MCF 10A (cell line): ENCODE measurements at regions of chr1 and their contacts with region 1.

Region 1: GRCh38 chr1:47997289-47998200 is at the start of gene TRABD2B:
- DNase-seq: peak; percentile 74
- H3K4me3 Mint-ChIP-seq: peak within 1 kb of the TSS; percentile 78
- H3K27ac Mint-ChIP-seq: peak within 1 kb of the TSS; percentile 76
- H3K4me1 Mint-ChIP-seq: peaks cover 33% of the 10 kb centered on the region
- H3K27me3 Mint-ChIP-seq: no peaks in the 10 kb centered on the region
- CTCF ChIP-seq: peak; percentile 85
- total RNA-seq, gene TRABD2B: 0.96 and 2.6 TPM in 2 replicates

Region 2: GRCh38 chr1:46940307-46940706 is 1057.2 kb before region 1 on chr1:
- CTCF ChIA-PET with region 1: no interaction called
- POLR2A ChIA-PET with region 1: no interaction called
- intact Hi-C with region 1: no loop called
- DNase-seq: no peak
- H3K4me3 Mint-ChIP-seq: no peak overlapping the region
- H3K27ac Mint-ChIP-seq: no peak overlapping the region
- H3K4me1 Mint-ChIP-seq: peaks cover 9% of the 10 kb centered on the region
- H3K27me3 Mint-ChIP-seq: peaks cover 11% of the 10 kb centered on the region
- CTCF ChIP-seq: no peak

Region 3: GRCh38 chr1:47738560-47739182 is 258.9 kb before region 1 on chr1:
- CTCF ChIA-PET with region 1: interaction called, 13 read pairs
- POLR2A ChIA-PET with region 1: interaction called, 3 read pairs
- intact Hi-C with region 1: loop called (anchors 2 kb)
- DNase-seq: peak; percentile 73
- H3K4me3 Mint-ChIP-seq: no peak overlapping the region
- H3K27ac Mint-ChIP-seq: no peak overlapping the region
- H3K4me1 Mint-ChIP-seq: no peaks in the 10 kb centered on the region
- H3K27me3 Mint-ChIP-seq: peaks cover 25% of the 10 kb centered on the region
- CTCF ChIP-seq: peak; percentile 77

Region 4: DNA sequence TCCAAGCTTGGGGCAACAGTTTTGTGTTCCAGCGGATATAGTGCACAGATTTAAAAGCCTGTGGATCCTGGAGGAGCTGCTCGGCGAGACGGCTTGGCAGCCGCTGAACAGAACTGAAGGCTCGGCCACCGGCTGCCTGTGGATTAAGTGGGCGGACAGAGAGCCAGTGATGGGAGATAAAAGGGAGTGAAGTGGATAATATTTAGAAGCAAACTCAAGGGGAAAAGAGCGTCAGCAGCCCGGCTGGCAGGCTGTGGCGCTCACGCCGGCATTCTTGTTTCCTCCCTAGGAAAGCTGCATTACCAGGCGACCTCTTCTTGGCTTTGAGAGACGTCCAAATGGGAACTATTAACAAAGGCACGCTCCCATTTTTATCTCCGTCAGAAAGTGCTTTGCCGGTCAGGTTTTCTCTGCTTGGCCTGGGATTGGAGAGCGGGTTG is 10.8 kb before region 1 on chr1:
- CTCF ChIA-PET with region 1: interaction called, 19 read pairs
- POLR2A ChIA-PET with region 1: no interaction called
- intact Hi-C with region 1: no loop called
- DNase-seq: no peak
- H3K4me3 Mint-ChIP-seq: no peak overlapping the region
- H3K27ac Mint-ChIP-seq: no peak overlapping the region
- H3K4me1 Mint-ChIP-seq: peaks cover 6% of the 10 kb centered on the region
- H3K27me3 Mint-ChIP-seq: no peaks in the 10 kb centered on the region
- CTCF ChIP-seq: no peak

Region 5: DNA sequence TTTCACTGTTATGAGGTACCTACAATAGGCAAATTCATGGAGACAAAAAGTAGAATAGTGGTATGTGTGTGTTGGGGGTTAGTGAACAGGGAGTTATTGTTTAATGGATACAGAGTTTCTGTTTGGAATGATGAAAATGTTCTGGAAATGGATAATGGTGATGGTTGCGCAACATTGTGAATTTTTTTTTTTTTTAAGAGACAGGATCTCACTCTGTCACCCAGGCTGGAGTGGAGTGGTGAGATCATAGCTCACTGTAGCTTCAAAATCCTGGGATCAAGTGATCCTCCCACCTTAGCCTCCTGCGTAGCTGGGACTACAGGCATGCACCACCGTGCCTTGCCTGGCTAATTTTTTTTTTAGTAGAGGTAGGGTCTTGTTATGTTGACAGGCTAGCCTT is 34.1 kb after region 1 on chr1:
- CTCF ChIA-PET with region 1: interaction called, 19 read pairs
- POLR2A ChIA-PET with region 1: no interaction called
- intact Hi-C with region 1: no loop called
- DNase-seq: peak; percentile 23
- H3K4me3 Mint-ChIP-seq: no peak overlapping the region
- H3K27ac Mint-ChIP-seq: no peak overlapping the region
- H3K4me1 Mint-ChIP-seq: peaks cover 21% of the 10 kb centered on the region
- H3K27me3 Mint-ChIP-seq: no peaks in the 10 kb centered on the region
- CTCF ChIP-seq: no peak

Region 6: DNA sequence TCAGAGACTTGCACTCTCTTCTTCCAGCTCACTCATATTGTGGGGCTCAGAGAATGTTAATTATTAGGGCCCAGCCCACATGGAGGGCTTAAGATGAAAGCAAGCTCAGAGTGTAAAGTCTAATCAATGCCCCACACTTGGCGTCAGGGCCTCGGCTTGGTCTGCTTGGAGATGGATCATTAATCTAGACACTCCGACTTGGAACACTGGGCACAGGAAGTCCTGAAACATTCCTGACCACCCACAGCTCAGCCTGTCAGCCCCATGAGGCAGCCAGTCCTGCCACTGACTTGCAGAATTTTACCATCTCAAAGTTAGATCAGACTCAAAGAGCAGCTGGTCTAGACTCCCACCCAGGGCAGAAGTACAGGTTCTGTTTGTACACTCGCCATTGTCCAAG is 69.4 kb after region 1 on chr1:
- CTCF ChIA-PET with region 1: interaction called, 141 read pairs
- POLR2A ChIA-PET with region 1: interaction called, 5 read pairs
- intact Hi-C with region 1: no loop called
- DNase-seq: no peak
- H3K4me3 Mint-ChIP-seq: no peak overlapping the region
- H3K27ac Mint-ChIP-seq: no peak overlapping the region
- H3K4me1 Mint-ChIP-seq: peaks cover 26% of the 10 kb centered on the region
- H3K27me3 Mint-ChIP-seq: no peaks in the 10 kb centered on the region
- CTCF ChIP-seq: no peak

Region 7: GRCh38 chr1:48236716-48237470 is 239.3 kb after region 1 on chr1:
- CTCF ChIA-PET with region 1: interaction called, 5 read pairs
- POLR2A ChIA-PET with region 1: no interaction called
- intact Hi-C with region 1: loop called (anchors 5 kb)
- DNase-seq: peak; percentile 43
- H3K4me3 Mint-ChIP-seq: no peak overlapping the region
- H3K27ac Mint-ChIP-seq: no peak overlapping the region
- H3K4me1 Mint-ChIP-seq: no peaks in the 10 kb centered on the region
- H3K27me3 Mint-ChIP-seq: no peaks in the 10 kb centered on the region
- CTCF ChIP-seq: peak; percentile 74

Region 8: DNA sequence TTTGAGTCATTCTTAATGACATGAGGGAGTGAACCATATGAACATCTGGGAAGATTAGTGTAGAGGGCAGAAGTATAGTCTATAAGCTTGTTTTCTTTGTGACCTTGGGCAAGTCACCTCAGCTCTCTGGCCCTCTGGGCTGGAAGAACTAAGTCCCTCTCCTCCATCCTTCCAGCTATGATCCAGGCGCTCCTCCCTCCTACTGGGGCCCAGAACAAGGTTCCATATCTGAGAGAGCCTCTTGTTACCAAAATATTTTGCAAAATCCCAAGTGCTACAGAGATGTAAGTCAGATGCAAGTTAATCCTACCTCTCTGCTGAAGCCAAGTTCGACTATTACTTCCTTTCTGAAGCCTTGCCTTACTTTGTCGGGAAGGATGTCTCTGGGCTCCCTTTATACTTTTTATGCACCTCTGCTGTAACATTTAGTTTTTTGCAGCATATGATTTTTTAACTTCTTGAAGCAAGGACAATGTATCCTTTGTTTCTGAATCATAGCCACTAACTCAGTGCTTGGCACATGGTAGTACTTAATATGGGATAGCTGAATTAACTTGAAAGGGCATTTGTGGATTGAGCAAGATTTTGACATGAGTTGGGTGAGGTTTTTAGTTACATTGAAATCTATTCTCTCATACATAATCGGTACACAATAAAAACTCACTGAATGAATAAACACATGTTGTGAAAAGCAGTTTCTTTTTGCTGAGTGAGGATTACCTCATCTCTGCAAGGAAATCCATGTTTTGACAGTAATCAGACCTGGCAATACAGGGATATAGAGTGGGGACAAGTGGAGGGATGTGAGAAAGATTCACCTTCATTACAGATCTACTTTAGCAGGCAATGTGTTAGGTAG is 833.8 kb after region 1 on chr1:
- CTCF ChIA-PET with region 1: no interaction called
- POLR2A ChIA-PET with region 1: no interaction called
- intact Hi-C with region 1: no loop called
- DNase-seq: peak; percentile 26
- H3K4me3 Mint-ChIP-seq: no peak overlapping the region
- H3K27ac Mint-ChIP-seq: peak overlapping the region; percentile 7
- H3K4me1 Mint-ChIP-seq: peaks cover 4% of the 10 kb centered on the region
- H3K27me3 Mint-ChIP-seq: no peaks in the 10 kb centered on the region
- CTCF ChIP-seq: no peak